OCI-LY7 (cell line): ENCODE measurements at regions of chr6 and their contacts with region 1.

Region 1: DNA sequence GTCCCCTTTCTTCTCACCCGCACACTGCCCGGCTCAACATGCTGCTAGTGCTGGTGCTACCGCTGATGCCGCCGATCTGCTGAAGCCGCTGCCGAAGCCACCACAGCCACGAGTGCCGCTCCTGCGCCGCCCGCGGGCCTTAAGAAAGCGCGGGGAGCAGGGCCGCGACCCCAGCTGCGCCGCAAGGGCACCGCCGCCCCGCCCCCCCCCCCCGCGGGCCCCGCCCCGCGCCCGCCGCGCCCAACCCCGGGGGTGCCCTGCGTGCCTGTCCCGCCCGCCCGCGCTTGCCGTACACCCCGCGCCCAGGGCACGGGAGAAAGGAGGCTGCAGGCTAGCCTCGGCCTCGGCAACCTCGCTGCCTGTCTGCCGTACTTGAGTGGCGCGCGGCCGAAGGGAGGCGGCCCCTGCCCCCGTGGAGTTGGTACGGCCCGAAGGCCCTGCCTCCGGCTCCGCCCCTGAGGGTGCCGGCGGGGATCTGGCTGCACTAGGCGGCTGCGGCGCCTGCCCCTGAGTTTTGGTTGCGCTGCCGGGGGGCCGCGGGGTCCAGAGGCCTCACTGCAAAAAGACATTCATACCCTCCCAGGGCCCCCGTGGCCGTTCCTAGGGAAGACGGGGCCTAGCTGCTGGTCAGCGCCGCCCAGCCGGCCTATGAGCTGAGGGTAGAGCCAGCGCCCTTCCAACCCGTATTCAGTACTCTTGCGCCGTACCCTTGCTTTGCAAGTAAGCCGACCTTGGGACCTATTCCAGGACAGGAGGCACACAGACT is at the start of gene SOD2:
- DNase-seq: peak; percentile 92
- H3K4me3 ChIP-seq: peak within 1 kb of the TSS; percentile 78
- H3K27ac ChIP-seq: peak within 1 kb of the TSS; percentile 46
- H3K4me1 ChIP-seq: peaks cover 21% of the 10 kb centered on the region
- CTCF ChIP-seq: no peak
- total RNA-seq, gene SOD2: 29.7 and 36.4 TPM in 2 replicates

Region 2: GRCh38 chr6:159726918-159727716 is 33.8 kb after region 1 on chr6 and contains the start of gene WTAP:
- CTCF ChIA-PET with region 1: no interaction called
- POLR2A ChIA-PET with region 1: interaction called, 8 read pairs
- intact Hi-C with region 1: loop called (anchors 1 kb)
- DNase-seq: peak; percentile 98
- H3K4me3 ChIP-seq: peak within 1 kb of the TSS; percentile 91
- H3K27ac ChIP-seq: peak within 1 kb of the TSS; percentile 89
- H3K4me1 ChIP-seq: peaks cover 39% of the 10 kb centered on the region
- CTCF ChIP-seq: no peak
- total RNA-seq, gene WTAP: 93.3 and 99.3 TPM in 2 replicates

Region 3: GRCh38 chr6:159789377-159790148 is 96.3 kb after region 1 on chr6 and contains the start of gene TCP1:
- CTCF ChIA-PET with region 1: interaction called, 3 read pairs
- POLR2A ChIA-PET with region 1: interaction called, 4 read pairs
- intact Hi-C with region 1: loop called (anchors 2 kb)
- DNase-seq: peak; percentile 99
- H3K4me3 ChIP-seq: peak within 1 kb of the TSS; percentile 99
- H3K27ac ChIP-seq: peak within 1 kb of the TSS; percentile 88
- H3K4me1 ChIP-seq: peaks cover 62% of the 10 kb centered on the region
- CTCF ChIP-seq: no peak
- total RNA-seq, gene TCP1: 319 and 321 TPM in 2 replicates

Region 4: GRCh38 chr6:159941286-159942113 is 248.2 kb after region 1 on chr6:
- CTCF ChIA-PET with region 1: no interaction called
- POLR2A ChIA-PET with region 1: no interaction called
- intact Hi-C with region 1: loop called (anchors 1 kb)
- DNase-seq: peak; percentile 51
- H3K4me3 ChIP-seq: no peak overlapping the region
- H3K27ac ChIP-seq: no peak overlapping the region
- H3K4me1 ChIP-seq: no peaks in the 10 kb centered on the region
- CTCF ChIP-seq: peak; percentile 77

Region 5: DNA sequence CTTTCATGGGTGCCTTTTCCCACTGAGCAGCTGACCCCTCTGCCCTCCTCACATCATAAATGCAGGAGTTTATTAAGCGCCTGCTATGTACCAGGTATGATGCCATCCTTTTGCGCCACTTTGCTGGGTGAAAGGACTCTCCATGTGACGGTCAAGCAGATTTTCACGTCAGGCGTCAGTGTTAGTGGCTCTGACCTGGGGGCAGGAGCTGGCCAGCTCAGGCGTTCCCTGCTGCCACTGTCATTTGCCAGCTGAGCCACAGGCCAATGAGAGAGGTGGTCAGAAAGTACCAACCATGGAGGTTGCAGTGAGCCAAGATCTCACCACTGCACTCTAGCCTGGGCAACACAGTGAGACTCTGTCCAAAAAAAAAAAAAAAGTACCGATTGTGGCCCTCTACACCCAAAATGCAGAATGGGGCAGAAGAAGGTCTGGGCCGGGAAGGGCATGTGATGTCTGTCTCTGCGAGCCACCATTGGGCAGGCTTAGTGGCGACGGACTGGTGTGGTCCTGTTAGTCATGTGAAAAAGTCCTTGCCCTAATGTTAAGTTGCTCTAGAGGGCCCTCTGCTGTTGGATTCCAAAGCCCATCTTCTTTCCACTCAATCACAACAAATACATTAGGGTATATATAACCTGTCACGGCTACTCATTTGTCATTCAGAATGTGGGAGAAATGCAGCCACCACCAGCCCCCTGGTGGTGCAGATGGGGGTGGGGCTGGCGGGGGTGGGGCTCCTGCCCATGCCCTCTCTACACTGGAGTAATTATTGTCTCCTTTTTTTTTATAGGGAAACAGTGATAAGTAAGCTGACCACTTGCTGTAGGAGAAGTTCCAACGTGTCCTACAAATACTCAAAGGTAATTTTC is 409.9 kb after region 1 on chr6:
- CTCF ChIA-PET with region 1: no interaction called
- POLR2A ChIA-PET with region 1: no interaction called
- intact Hi-C with region 1: loop called (anchors 10 kb)
- DNase-seq: peak; percentile 47
- H3K4me3 ChIP-seq: no peak overlapping the region
- H3K27ac ChIP-seq: no peak overlapping the region
- H3K4me1 ChIP-seq: no peaks in the 10 kb centered on the region
- CTCF ChIP-seq: peak; percentile 76